ENCODE measurements at regions of chr16 and their contacts with region 1.

Region 1: DNA sequence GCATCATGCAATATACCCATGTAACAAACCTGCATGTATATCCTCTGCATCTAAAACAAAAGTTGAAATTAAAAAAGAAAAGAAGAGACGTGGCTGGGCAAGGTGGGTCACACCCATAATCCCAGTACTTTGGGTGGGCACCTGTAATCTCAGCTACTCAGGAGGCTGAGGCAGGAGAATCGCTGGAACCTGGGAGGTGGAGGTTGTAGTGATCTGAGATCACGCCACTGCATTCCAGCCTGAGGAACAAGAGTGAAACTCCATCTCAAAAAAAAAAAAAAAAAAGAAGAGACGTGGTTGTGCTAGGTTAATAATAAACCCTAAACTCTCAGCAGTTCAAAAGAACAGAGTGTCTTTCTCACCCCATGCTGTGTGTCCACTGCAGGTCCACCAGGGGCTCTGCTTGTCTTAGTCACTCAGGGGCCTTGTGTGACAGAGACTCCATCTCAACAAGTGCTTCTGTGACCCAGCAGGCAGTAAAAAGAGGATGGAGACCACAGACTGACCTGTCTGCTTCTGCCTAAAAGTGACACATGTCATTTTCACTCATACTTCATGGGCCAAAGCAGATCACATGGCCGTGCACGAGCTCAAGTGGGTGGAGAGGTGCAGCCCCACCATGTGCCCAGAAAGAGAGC is 22.3 kb upstream of the N4BP1 start:
- DNase-seq: no peak
- ATAC-seq: no peak
- H3K4me3 Mint-ChIP-seq: no peak overlapping the region
- H3K27ac Mint-ChIP-seq: no peak overlapping the region
- H3K4me1 Mint-ChIP-seq: peaks cover 11% of the 10 kb centered on the region
- H3K27me3 Mint-ChIP-seq: peaks cover 2% of the 10 kb centered on the region; the same call in 1 of the 2 replicates
- CTCF ChIP-seq: no peak

Region 2: DNA sequence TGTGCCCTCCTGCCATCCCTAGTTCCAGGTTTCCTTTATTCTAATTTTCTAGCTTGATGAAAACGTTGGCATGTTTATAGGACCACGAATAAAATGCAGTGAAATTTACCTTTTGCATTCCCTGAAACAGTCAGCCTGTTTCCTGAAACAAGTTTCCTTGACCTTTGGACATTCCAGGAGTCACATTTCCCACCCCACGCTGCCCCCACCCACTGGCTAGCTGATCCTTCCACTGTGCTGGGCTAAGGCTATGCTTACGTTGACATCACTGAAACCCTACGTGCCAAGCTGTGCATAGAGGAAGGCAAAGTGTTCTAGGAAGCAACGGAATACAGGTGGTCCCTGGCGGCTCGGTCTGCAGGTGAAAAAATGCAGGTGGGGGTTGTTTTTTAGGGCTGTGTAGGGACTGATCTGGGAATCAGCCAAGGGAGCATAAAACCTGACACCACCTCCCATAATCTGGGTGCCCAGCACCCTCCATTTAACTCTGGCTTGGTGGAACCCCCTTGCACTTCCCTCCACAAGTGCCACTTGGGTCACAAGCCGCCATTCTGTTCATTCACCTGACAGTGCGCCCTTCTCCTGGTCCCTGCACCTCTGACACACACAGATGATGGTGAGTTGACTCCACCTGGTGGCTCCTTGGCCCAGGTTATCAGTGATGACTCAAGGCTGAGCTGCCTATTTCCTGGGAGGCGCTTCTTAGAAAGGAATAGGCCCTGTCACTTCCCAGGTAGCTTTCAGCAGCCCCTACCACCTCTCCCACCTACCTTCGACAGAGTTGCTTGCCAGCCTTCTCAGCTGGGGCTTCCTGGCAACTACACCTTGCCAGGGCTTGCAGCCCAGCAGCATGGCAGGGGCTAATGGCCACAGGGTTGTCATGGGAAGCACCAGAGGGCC is 105.9 kb before region 1 on chr16:
- CTCF ChIA-PET with region 1: interaction called, 15 read pairs
- POLR2A ChIA-PET with region 1: no interaction called
- DNase-seq: peak; percentile 72
- ATAC-seq: peak; percentile 96
- H3K4me3 Mint-ChIP-seq: no peak overlapping the region
- H3K27ac Mint-ChIP-seq: no peak overlapping the region
- H3K4me1 Mint-ChIP-seq: peaks cover 6% of the 10 kb centered on the region
- H3K27me3 Mint-ChIP-seq: no peaks in the 10 kb centered on the region
- CTCF ChIP-seq: no peak

Region 3: DNA sequence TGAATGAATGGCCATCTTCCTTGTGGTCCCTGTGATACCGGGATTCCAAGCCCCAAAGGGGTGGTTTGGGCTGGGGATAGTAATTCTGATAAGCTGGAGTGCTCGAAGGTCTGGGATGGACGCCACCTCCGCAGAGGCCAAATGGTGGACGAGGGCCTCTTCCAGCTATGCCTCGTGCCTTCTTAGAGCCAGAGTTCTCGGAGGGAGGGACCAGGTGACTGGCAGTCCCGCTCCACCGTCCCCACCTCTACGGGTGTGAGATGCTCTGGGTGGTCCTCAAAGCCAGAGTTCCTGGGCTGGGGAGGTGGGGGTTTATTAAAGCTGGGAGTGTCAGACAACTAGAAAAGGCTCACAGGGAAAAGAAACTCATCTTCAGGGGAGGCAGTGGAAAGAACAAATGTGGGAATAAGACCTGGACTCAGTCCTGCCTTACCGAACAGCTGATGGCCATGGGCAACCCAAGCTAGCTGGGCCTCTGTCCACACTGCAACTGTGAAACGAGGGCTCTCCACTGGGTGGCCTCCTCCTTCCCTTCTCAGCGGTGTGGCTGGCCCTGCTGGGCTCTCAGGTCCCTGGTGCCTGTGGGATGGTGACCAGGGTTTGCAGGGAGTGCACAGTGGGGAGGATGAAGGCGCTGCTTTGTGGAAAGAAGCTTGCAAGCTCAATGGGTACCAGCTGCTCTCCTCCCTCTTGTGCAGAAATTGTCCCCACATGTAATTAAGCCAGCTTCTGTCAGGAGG is 97.5 kb before region 1 on chr16:
- CTCF ChIA-PET with region 1: interaction called, 11 read pairs
- POLR2A ChIA-PET with region 1: no interaction called
- DNase-seq: no peak
- ATAC-seq: no peak
- H3K4me3 Mint-ChIP-seq: no peak overlapping the region
- H3K27ac Mint-ChIP-seq: 0 out of 2 replicates have a peak overlapping the region, but pooled peaks have one; percentile 19
- H3K4me1 Mint-ChIP-seq: peaks cover 8% of the 10 kb centered on the region; the same call in 1 of the 2 replicates
- H3K27me3 Mint-ChIP-seq: no peaks in the 10 kb centered on the region
- CTCF ChIP-seq: no peak

Region 4: GRCh38 chr16:48609652-48610029 is 22.6 kb before region 1 on chr16:
- CTCF ChIA-PET with region 1: interaction called, 15 read pairs
- POLR2A ChIA-PET with region 1: no interaction called
- DNase-seq: peak; percentile 56
- ATAC-seq: peak; percentile 27
- H3K4me3 Mint-ChIP-seq: peak overlapping the region; percentile 48
- H3K27ac Mint-ChIP-seq: no peak overlapping the region
- H3K4me1 Mint-ChIP-seq: peaks cover 42% of the 10 kb centered on the region
- H3K27me3 Mint-ChIP-seq: no peaks in the 10 kb centered on the region
- CTCF ChIP-seq: no peak

Region 5: GRCh38 chr16:48734220-48734859 is 102.1 kb after region 1 on chr16:
- CTCF ChIA-PET with region 1: no interaction called
- POLR2A ChIA-PET with region 1: no interaction called
- DNase-seq: no peak
- ATAC-seq: no peak
- H3K4me3 Mint-ChIP-seq: no peak overlapping the region
- H3K27ac Mint-ChIP-seq: no peak overlapping the region
- H3K4me1 Mint-ChIP-seq: peaks cover 2% of the 10 kb centered on the region; the same call in 1 of the 2 replicates
- H3K27me3 Mint-ChIP-seq: peaks cover 5% of the 10 kb centered on the region; the same call in 1 of the 2 replicates
- CTCF ChIP-seq: no peak

Measured in WTC11 (cell line).